ENCODE measurements at regions of chr10 and their contacts with region 1.

Region 1: DNA sequence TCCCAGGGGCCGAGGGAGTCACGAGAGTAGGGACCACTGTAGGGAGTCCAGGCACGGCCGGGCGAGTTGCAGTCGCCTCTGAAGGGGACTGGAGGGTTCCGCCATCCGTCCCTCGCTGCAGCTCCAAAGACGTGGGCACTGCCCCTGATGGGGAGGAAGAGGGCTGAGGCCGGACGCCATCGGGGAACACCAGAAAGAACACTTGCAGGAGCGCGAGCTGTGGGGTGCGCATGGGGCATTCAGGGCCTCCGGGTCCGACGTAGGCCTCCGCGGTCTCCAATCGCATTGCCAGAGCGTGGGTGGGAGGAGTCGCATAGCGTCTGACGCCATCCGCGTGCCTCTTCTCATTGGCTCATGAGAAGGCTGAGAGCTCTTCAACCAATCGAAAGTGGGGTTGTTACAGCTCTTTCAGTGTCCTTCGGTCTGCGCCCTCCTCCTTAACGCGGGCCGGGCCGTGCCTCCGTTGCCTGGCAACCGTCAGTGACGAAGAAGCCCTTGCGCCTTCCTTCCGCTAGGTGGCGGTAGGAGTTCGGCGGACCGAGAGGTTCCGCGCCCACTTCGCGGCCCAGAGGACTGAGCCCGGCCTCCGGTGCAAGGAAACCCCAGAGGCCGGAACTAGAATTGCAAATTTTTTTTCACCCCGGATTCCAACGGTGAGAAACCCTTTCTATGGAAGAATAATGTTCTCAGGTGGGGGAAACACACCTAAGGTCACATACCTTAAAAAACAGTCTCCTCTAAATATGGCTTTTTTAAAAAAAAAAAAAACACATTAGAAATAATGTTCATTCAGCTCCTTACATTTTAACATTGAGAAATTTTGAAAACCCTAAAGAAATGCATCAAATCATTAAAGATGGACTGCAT is at the start of gene TCTN3:
- DNase-seq: peak; percentile 98
- ATAC-seq: peak; percentile 96
- H3K4me3 ChIP-seq: peak within 1 kb of the TSS; percentile 96
- H3K27ac ChIP-seq: no peak within 1 kb of the TSS
- H3K4me1 ChIP-seq: peaks cover 11% of the 10 kb centered on the region; the same call in 1 of the 2 replicates
- H3K27me3 ChIP-seq: no peaks in the 10 kb centered on the region
- CTCF ChIP-seq: peak; percentile 89
- total RNA-seq, gene TCTN3: 14.5 and 21.8 TPM in 2 replicates

Region 2: GRCh38 chr10:95319239-95319638 is 374.7 kb before region 1 on chr10:
- CTCF ChIA-PET with region 1: no interaction called
- POLR2A ChIA-PET with region 1: no interaction called
- intact Hi-C with region 1: no loop called
- DNase-seq: no peak
- ATAC-seq: no peak
- H3K4me3 ChIP-seq: no peak overlapping the region
- H3K27ac ChIP-seq: no peak overlapping the region
- H3K4me1 ChIP-seq: no peaks in the 10 kb centered on the region
- H3K27me3 ChIP-seq: no peaks in the 10 kb centered on the region
- CTCF ChIP-seq: no peak

Region 3: DNA sequence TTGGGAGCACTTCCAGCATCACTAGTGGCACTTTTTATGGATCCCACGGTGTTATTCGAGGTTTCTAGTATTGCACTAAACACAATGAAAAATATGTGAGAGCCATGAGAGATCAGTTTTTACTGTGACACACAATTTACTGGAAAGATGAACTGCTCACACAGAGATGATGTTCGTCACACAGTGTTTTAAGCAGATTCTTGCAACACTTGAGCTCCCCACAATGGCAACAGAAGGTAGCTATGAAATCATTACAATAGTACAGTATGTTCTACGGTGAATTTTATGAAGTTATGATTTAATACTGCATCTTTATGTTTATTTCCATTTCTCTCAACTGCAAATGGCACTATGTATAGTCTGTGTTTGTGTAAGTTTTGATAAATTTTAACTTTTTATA is 34.6 kb after region 1 on chr10:
- CTCF ChIA-PET with region 1: interaction called, 10 read pairs
- POLR2A ChIA-PET with region 1: no interaction called
- intact Hi-C with region 1: no loop called
- DNase-seq: peak; percentile 36
- ATAC-seq: no peak
- H3K4me3 ChIP-seq: no peak overlapping the region
- H3K27ac ChIP-seq: no peak overlapping the region
- H3K4me1 ChIP-seq: no peaks in the 10 kb centered on the region
- H3K27me3 ChIP-seq: no peaks in the 10 kb centered on the region
- CTCF ChIP-seq: 0 out of 2 replicates have a peak, but pooled peaks have one; percentile 21

Region 4: DNA sequence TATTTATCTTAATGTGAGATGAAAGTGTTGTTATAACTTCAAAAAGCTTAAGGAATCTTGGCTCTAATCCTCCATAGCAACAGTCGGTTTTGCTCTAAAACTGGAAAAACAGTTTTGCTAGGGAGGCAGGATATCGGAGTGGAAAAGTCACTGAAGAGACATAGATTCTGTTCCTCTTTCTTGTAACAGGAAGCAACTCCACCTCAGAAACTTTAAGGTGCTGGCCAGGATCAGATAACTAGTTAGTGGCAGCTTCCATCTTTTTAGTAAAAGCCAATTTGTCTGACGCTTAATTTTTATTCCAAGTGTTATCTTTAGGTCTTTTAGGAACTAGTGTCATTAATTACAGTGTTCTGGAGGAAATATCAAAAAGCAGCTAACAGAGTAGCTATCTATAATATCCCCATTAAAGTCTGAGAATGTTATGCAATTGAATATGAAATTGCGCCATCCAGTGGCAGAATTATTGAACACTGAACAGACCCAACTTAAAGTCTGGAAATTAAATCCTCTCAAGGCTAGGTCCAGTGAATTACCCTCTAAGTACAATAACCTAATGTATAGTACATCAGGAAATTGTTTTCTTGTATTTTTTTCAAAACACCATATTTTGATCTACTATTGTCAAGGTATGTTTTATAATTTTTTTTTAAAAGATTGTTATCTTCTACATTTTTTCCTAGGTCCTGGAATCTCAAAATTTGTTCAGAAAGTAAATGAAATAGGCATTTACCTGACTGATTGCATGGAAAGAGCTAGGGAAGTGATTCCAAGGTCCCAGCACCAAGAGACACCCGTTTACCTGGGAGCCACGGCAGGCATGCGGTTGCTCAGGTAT is 148.0 kb after region 1 on chr10:
- CTCF ChIA-PET with region 1: interaction called, 30 read pairs
- POLR2A ChIA-PET with region 1: no interaction called
- intact Hi-C with region 1: loop called (anchors 1 kb)
- DNase-seq: peak; percentile 72
- ATAC-seq: peak; percentile 43
- H3K4me3 ChIP-seq: no peak overlapping the region
- H3K27ac ChIP-seq: no peak overlapping the region
- H3K4me1 ChIP-seq: no peaks in the 10 kb centered on the region
- H3K27me3 ChIP-seq: peaks cover 22% of the 10 kb centered on the region
- CTCF ChIP-seq: peak; percentile 74

Region 5: DNA sequence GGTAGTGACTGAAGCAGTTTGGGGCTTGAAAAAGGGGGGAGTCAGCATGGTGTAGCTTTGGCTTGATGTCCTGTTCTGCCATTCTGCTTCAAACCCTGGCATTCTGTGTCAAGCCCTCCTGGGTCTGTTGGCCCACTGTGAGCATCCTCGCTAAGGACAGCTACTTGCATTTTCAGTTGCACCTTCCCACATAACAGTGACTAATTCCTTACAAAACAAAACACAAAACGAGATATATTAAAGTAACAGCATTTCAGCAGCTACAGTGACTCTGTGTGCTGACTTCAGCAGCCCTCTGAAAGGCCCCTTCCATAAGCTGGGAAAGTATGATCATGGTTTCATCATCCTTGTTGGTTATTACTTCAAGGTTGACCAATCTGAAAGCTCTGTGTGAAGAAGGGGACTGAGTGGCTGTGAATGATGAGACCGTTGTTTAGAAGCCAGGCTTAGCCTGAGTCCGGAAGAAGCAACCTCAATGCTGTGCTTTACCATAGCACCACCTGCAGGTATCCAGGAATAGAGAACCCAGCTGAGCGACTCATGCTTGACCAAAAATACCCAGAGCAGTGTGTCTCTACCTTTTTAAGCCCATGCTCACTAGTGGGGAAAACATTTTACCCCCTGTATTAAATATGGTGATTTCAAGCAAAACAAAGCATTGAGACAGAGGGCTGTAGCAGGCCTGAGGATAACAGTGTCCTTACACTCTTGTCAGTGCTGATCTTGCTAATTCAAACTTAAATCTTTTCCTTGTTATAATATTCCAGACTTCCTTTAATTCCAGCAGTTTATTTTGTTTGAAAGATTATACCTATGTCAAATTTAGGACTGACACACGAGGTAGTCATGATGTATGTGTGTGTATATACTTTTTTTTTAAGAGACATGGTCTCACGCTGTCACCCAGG is 171.3 kb after region 1 on chr10:
- CTCF ChIA-PET with region 1: interaction called, 12 read pairs
- POLR2A ChIA-PET with region 1: interaction called, 4 read pairs
- intact Hi-C with region 1: loop called (anchors 1 kb)
- DNase-seq: peak; percentile 56
- ATAC-seq: peak; percentile 87
- H3K4me3 ChIP-seq: no peak overlapping the region
- H3K27ac ChIP-seq: no peak overlapping the region
- H3K4me1 ChIP-seq: no peaks in the 10 kb centered on the region
- H3K27me3 ChIP-seq: no peaks in the 10 kb centered on the region
- CTCF ChIP-seq: peak; percentile 70

Region 6: GRCh38 chr10:95907456-95908253 is 213.8 kb after region 1 on chr10 and contains the start of gene CC2D2B:
- CTCF ChIA-PET with region 1: interaction called, 7 read pairs
- POLR2A ChIA-PET with region 1: no interaction called
- intact Hi-C with region 1: loop called (anchors 5 kb)
- DNase-seq: peak; percentile 71
- ATAC-seq: peak; percentile 95
- H3K4me3 ChIP-seq: peak within 1 kb of the TSS; percentile 81
- H3K27ac ChIP-seq: no peak within 1 kb of the TSS
- H3K4me1 ChIP-seq: peaks cover 5% of the 10 kb centered on the region; the same call in 1 of the 2 replicates
- H3K27me3 ChIP-seq: peaks cover 12% of the 10 kb centered on the region
- CTCF ChIP-seq: 0 out of 2 replicates have a peak, but pooled peaks have one; percentile 11
- total RNA-seq, gene CC2D2B: not detected in 2 replicates

Region 7: DNA sequence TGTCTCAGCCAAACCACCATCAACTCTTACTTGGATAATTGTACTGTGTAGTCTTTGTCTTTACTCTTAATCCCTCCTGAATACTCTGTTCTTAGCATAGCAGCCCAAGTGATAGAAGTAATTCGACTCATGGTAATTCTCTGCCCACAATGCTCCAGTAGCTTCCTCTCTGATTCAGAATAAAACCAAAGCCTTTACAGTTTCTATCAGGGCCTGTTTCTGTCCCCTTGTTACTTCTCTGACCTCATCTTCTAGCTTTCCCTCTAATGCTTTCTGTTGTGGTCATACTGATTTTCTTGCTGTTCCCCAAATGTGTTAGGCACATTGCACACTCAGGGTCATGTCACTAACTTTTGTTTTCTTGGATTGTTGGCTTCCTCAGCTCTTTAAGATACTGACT is 444.2 kb after region 1 on chr10:
- CTCF ChIA-PET with region 1: no interaction called
- POLR2A ChIA-PET with region 1: interaction called, 13 read pairs
- intact Hi-C with region 1: no loop called
- DNase-seq: no peak
- ATAC-seq: no peak
- H3K4me3 ChIP-seq: no peak overlapping the region
- H3K27ac ChIP-seq: no peak overlapping the region
- H3K4me1 ChIP-seq: peaks cover 5% of the 10 kb centered on the region; the same call in 1 of the 2 replicates
- H3K27me3 ChIP-seq: no peaks in the 10 kb centered on the region
- CTCF ChIP-seq: no peak

Measured in PC-3 (cell line).